Transverse colon (tissue), 4 donors: ENCODE measurements at regions of chr13 and their contacts with region 1.

Region 1: DNA sequence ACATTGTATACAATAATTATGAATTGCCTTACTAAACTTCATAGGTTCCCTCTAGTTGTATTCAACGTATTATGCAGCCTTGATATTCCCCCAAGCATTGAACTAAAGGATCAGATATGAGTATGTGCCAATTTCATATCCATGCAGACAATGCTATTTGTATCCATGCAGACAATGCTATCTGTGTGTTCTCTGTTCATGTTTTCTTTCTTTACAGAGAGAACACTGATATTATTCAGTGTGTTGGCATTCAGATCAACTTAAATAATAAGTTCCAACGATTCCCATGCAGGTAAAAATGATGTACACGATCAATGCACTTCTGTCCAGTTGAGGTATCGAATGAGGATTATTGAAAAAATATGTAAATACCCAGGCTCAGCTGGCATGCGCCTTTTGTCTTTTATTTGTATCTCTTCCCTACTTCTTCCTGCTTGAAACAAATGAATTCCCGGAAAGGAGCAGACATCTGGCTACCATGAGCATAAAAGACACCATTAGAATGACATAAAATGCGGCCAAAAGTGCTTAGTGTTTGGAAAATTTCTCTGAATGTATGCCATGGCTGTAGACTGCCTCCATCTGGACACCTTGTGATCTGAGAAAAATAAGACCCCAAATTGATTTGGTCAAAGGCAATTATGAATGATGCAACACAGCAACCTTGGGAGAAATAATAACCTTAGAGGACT is 731.5 kb downstream of the SLITRK1 start:
- DNase-seq: no peak
- H3K4me3 ChIP-seq: no peak overlapping the region
- H3K27ac ChIP-seq: no peak overlapping the region
- H3K4me1 ChIP-seq: no peaks in the 10 kb centered on the region
- H3K27me3 ChIP-seq: no peaks in the 10 kb centered on the region
- CTCF ChIP-seq: no peak
- EP300 ChIP-seq: no peak
- POLR2A ChIP-seq: no peak

Region 2: DNA sequence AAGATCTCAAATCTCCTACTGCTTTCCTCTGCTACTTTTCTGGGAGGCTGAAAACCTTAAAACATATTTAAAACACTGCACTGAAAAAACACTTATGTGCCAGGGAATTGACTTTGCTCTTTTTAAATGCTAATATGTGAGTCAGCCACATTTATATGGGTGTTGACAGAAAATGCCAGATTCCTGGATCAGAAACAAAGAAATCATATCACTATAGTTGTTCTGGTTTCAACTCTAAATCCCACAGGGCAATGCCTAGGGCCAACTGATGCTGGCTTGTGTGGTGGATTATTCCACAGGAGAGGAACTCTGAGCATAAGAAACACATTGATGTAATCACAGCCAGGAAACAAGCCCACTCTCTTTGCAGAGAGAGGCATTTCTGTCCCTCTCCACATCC is 1370.9 kb before region 1 on chr13:
- in situ Hi-C with region 1: no loop called
- intact Hi-C with region 1: no loop called
- DNase-seq: no peak
- H3K4me3 ChIP-seq: no peak overlapping the region
- H3K27ac ChIP-seq: no peak overlapping the region
- H3K4me1 ChIP-seq: no peaks in the 10 kb centered on the region
- H3K27me3 ChIP-seq: no peaks in the 10 kb centered on the region
- CTCF ChIP-seq: no peak
- EP300 ChIP-seq: no peak
- POLR2A ChIP-seq: no peak

Region 3: DNA sequence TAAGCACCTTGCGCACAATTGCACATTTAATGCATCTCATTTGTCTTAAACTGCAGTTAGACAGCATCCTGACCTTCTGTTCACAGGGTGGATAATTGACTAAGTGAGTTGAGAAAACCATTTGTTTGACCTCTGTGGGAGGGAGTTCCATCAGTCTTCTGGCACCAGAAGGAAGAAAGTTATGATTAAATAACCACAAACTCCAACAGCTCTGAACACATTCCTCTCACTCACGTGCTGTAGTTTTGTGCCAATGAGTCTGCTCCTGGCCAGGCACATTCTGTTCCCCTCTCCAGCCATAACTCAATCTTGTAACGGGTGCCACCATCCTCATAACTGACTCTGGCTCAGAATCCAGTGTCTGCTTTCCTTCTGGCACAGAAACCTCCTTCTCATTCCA is 85.7 kb before region 1 on chr13:
- in situ Hi-C with region 1: no loop called
- intact Hi-C with region 1: no loop called
- DNase-seq: peak; percentile 24
- H3K4me3 ChIP-seq: no peak overlapping the region
- H3K27ac ChIP-seq: peak overlapping the region in 2 of 4 donors; percentile 22 to 62
- H3K4me1 ChIP-seq: no peaks in the 10 kb centered on the region
- H3K27me3 ChIP-seq: no peaks in the 10 kb centered on the region
- CTCF ChIP-seq: no peak
- EP300 ChIP-seq: peak; percentile 98
- POLR2A ChIP-seq: no peak

Region 4: DNA sequence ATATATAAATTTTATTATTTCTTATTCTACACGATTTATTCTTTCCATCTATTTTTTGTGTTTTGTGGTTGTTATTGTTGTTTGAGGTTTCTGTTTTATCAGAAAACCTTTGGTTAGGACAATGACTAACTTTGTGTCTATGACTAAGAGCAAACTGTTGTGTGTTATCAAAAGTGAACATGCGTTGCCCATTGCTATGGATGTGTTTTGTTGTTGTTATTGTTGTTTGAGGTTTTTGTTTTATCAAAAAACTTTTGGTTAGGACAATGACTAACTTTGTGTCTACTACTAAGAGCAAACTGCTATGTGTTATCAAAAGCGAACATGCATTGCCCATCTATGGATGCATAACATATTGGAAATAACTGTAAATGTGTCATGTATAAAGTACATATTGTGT is 39.3 kb after region 1 on chr13:
- in situ Hi-C with region 1: no loop called
- intact Hi-C with region 1: no loop called
- DNase-seq: no peak
- H3K4me3 ChIP-seq: no peak overlapping the region
- H3K27ac ChIP-seq: no peak overlapping the region
- H3K4me1 ChIP-seq: no peaks in the 10 kb centered on the region
- H3K27me3 ChIP-seq: no peaks in the 10 kb centered on the region
- CTCF ChIP-seq: no peak
- EP300 ChIP-seq: no peak
- POLR2A ChIP-seq: no peak

Region 5: GRCh38 chr13:83440465-83440864 is 289.7 kb after region 1 on chr13:
- in situ Hi-C with region 1: no loop called
- intact Hi-C with region 1: no loop called
- DNase-seq: no peak
- H3K4me3 ChIP-seq: no peak overlapping the region
- H3K27ac ChIP-seq: no peak overlapping the region
- H3K4me1 ChIP-seq: no peaks in the 10 kb centered on the region
- H3K27me3 ChIP-seq: no peaks in the 10 kb centered on the region
- CTCF ChIP-seq: no peak
- EP300 ChIP-seq: no peak
- POLR2A ChIP-seq: no peak

Region 6: GRCh38 chr13:83568019-83568418 is 417.3 kb after region 1 on chr13:
- in situ Hi-C with region 1: no loop called
- intact Hi-C with region 1: loop called (anchors 5 kb)
- DNase-seq: no peak
- H3K4me3 ChIP-seq: no peak overlapping the region
- H3K27ac ChIP-seq: no peak overlapping the region
- H3K4me1 ChIP-seq: no peaks in the 10 kb centered on the region
- H3K27me3 ChIP-seq: no peaks in the 10 kb centered on the region
- CTCF ChIP-seq: no peak
- EP300 ChIP-seq: no peak
- POLR2A ChIP-seq: no peak